ENCODE measurements at regions of chr1 and their contacts with region 1.

Region 1: DNA sequence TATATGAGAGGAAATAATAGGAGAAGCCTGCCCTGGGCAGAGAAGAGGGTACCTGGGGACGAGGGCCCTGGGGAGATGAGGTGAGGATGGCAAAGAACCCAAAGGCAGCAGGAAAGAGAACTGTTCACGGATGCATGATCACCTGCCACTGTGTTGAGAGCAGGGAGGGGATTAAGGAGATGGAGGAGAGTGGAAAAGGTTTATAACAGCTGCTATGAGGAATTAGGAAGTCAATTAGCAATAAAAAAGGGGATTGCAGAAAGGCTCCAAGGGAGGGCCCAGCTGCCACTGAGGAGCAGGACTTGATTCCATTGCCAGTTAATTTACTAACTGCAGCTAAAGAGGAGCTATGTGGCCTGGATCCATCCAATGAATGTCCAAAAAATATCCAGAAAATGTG is 61.1 kb downstream of the GFI1 start:
- DNase-seq: no peak
- CTCF ChIP-seq: no peak

Region 2: DNA sequence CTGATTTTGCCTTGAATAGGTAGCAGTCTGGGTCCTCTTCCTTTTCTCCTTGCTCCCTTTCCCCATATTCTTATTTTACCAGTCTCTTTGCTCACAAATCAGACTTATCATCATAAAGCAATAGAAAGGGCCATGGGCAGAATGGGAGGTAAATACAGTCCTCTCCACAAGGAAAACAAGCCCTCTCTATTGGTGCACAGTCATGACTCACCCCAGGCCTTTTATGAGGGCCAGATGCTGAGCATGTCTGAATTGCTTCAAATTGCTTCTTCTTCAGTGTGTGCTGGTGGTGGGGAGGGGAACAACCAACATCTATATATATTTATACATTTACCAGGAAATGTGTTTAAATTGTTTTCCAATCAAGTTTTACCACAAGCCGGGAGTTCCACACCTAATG is 14.1 kb before region 1 on chr1:
- CTCF ChIA-PET with region 1: interaction called, 14 read pairs
- POLR2A ChIA-PET with region 1: no interaction called
- DNase-seq: no peak
- CTCF ChIP-seq: no peak

Region 3: GRCh38 chr1:93345633-93346420 is 920.2 kb after region 1 on chr1 and contains the start of gene DR1:
- CTCF ChIA-PET with region 1: no interaction called
- POLR2A ChIA-PET with region 1: no interaction called
- DNase-seq: peak; percentile 95
- CTCF ChIP-seq: no peak

Measured in GM10248 (cell line).